Activated T-helper 1 cell treated with anti-CD3 and anti-CD28 coated beads, Interleukin-12 subunit alpha, Interleukin-12 subunit beta, Interleukin-2, Interleukin-4 antibody, amounts not matched to agents 30 ng/mL and 10 ng/mL and 1 ng/mL, durations not matched to agents 14 hours and 24 hours and 36 hours (primary cell): ENCODE measurements at regions of chr4 and their contacts with region 1.

Region 1: DNA sequence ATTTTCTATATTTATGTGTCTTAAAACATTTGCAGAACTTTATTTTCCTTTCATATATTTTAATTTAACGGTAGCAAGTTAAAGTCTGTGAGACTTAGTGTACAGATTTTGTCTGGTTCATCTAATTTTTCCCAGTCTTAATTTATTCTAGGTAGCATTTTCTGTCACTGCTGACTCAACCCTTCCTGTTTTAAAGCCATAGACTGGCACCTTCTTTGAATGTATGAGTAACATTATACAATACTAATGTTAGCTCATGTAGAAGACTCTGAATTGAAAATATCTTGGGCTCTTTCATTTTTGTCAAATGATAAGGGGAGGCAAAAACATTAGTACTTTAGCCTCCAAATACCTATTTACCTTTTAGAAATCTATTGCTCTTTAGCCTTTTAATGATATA is 43.6 kb downstream of the BLTP1 start:
- DNase-seq: no peak
- H3K4me3 Mint-ChIP-seq: no peak overlapping the region
- H3K27ac Mint-ChIP-seq: no peak overlapping the region
- H3K4me1 Mint-ChIP-seq: no peaks in the 10 kb centered on the region
- H3K27me3 Mint-ChIP-seq: no peaks in the 10 kb centered on the region

Region 2: DNA sequence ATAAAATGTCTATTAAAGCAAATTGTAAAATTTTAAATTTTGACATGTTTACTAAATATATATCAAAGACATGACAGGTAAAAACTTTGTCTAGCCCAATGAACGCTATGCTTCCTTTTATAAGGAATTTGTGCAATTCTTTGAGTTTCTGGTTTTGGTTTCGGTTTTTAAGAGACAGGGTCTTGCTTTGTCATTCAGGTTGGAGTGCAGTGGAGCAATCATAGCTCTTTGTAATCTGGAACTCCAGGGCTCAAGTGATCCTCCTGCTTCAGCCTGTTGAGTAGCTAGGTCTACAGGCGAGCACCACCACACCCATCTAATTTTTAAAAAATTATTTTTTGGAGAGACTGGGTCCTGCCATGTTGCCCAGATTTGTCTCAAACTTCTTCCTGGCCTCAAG is 17.2 kb after region 1 on chr4:
- intact Hi-C with region 1: loop called (anchors 2 kb)
- DNase-seq: no peak
- H3K4me3 Mint-ChIP-seq: no peak overlapping the region
- H3K27ac Mint-ChIP-seq: no peak overlapping the region
- H3K4me1 Mint-ChIP-seq: peaks cover 17% of the 10 kb centered on the region
- H3K27me3 Mint-ChIP-seq: no peaks in the 10 kb centered on the region

Region 3: DNA sequence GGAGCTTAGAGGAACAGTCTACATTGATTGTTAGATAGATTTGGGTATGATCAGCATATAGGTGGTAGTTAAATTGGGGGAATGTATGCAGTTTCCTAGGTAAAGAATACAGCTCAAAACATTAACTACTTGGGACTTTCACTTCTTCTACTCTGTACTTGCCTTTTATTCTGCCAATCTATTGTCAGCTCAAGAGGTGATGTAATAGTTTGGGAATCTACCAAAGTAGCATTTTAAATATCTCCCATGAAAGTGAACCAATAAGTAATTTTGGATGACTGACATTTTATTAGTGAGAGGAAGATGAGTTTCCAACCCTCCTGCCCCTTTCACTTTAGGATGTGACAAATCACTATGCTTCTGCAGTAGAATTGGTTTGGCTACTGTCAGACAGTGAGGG is 683.3 kb after region 1 on chr4:
- intact Hi-C with region 1: no loop called
- DNase-seq: no peak
- H3K4me3 Mint-ChIP-seq: no peak overlapping the region
- H3K27ac Mint-ChIP-seq: no peak overlapping the region
- H3K4me1 Mint-ChIP-seq: no peaks in the 10 kb centered on the region
- H3K27me3 Mint-ChIP-seq: no peaks in the 10 kb centered on the region